GM13977 (cell line): ENCODE measurements at regions of chr2 and their contacts with region 1.

Region 1: GRCh38 chr2:16745466-16745865 is 79.8 kb upstream of the CYRIA start:
- DNase-seq: no peak
- CTCF ChIP-seq: no peak

Region 2: DNA sequence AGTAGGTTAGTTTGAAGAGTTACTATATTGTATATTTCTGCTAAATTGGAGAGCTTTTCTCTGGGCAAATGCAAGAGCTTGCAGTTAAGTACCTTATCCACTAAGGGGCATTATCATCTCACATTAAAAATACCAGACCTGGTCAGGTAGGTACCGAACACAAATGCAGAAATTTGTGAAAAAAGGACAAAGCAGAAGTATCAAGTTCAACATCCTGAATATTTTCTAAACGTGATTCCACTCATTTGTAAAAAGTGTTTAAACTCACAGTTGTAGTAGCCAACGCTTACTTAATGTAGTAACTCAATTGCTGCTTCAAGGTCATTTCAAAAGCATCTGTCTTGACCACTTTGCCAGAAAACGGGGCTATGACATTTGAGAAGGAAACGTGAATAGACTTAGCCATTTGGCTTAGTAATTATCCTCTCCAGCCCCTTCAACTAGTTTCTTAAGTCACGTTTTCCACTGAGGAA is 131.9 kb before region 1 on chr2:
- in situ Hi-C with region 1: loop called (anchors 10 kb)
- DNase-seq: peak; percentile 53
- CTCF ChIP-seq: peak; percentile 62